BJ (cell line): ENCODE measurements at regions of chr5 and their contacts with region 1.

Region 1: GRCh38 chr5:111530298-111530740 is 18.0 kb upstream of the STARD4 start:
- DNase-seq: no peak
- H3K4me3 ChIP-seq: no peak overlapping the region
- H3K27me3 ChIP-seq: no peaks in the 10 kb centered on the region
- CTCF ChIP-seq: no peak

Region 2: DNA sequence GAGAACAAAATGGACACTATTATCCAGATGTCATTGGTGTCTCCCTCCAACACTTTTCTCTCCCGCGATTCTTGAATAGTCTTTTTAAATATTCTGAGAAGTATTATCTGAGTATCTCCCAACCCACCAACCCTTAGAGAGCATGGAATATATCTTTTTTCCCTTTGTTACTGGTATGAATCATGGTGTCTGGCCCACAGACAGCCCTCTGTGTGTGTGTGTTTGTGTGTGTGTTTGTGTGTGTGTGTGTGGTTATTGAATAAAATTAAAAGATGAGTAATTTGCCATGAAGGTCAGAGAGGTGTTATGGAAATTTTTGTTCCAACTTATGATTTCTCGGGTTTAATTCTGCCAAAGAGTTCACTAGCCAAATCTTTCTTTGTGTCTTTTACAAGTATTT is 258.4 kb before region 1 on chr5:
- CTCF ChIA-PET with region 1: no interaction called
- POLR2A ChIA-PET with region 1: no interaction called
- DNase-seq: no peak
- H3K4me3 ChIP-seq: no peak overlapping the region
- H3K27me3 ChIP-seq: no peaks in the 10 kb centered on the region
- CTCF ChIP-seq: no peak

Region 3: GRCh38 chr5:111517853-111518501 is 12.3 kb before region 1 on chr5:
- CTCF ChIA-PET with region 1: interaction called, 31 read pairs
- POLR2A ChIA-PET with region 1: no interaction called
- DNase-seq: no peak
- H3K4me3 ChIP-seq: no peak overlapping the region
- H3K27me3 ChIP-seq: no peaks in the 10 kb centered on the region
- CTCF ChIP-seq: no peak

Region 4: DNA sequence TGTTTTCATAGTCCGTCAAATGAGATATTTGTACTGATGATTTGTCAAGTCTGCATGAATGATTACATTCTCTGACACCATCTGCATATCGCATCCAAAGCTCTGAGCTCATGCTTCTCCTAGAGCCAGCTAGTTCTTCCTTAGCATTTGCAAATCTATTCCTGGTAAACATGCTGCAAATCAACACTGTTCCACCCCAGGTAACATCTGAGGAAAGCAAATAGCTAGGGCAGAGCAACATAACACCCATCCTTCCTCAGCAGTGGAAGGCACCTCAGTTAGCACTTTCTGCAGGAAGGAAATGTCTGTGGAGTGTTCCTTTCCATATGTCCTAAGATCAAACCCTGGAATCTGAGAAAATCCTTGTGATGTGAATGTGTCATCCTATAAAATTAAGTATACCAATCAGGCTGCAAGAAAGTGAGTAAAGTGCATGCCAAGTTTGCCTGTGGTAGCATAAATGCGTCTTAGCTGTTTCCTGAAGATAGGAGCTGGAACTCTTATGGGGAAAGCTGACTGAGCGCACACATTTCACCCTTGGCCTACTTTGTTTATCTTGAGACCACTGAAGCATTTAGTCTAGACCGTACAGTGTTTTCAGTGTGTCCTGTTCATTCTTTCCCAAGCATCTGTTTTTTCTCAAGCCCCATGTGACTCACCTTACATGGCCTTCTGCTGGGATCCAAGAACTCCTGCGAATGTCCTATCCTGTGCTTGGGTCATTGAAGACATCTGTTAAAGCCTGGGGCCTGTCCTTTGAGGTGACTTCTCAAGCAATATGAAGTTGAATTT is 32.9 kb after region 1 on chr5:
- CTCF ChIA-PET with region 1: interaction called, 4 read pairs
- POLR2A ChIA-PET with region 1: interaction called, 23 read pairs
- DNase-seq: peak; percentile 87
- H3K4me3 ChIP-seq: no peak overlapping the region
- H3K27me3 ChIP-seq: no peaks in the 10 kb centered on the region
- CTCF ChIP-seq: no peak

Region 5: GRCh38 chr5:111742177-111742994 is 212.1 kb after region 1 on chr5:
- CTCF ChIA-PET with region 1: interaction called, 5 read pairs
- POLR2A ChIA-PET with region 1: interaction called, 15 read pairs
- DNase-seq: peak; percentile 78
- H3K4me3 ChIP-seq: no peak overlapping the region
- H3K27me3 ChIP-seq: no peaks in the 10 kb centered on the region
- CTCF ChIP-seq: no peak

Region 6: DNA sequence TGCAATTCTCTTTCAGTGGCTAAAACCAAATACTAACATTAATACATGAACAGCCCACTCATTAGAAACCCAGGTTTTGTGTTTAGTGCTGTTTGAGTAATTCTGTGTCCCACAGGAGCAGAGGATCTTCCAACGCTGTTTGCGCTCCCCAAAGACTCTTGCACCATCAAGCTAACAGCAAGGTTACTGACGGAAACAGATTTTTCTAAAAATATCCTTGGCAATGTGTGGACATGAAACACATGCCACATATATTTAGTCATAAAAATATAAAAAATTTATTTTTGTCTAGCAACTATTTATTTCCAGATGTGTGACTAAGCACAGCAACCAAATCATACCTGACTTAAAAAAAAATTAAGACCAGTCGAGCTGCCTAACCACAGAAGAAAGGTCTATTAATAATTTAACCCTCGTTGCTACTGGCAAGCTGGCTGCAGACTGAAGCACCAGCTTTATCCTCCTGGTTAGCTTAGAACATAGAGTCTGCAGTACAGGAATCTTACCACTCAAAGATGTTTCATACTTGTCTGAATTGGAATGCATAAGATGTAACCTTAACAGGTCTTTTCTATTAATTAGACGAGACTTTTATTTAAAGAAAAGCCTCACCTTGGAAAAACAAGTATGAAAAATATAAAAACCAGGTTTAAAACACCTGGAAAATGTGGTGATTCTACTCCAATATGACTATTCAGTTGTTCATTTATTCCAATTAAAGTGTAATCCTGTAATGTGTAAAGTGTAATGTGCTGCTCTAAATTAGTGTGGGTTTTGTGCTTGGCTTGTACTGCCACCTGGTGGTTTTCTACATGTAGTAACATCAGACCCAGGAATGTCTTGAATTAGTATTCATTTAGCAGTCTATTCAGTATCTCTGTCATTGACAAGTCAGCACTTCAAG is 616.3 kb after region 1 on chr5:
- CTCF ChIA-PET with region 1: interaction called, 22 read pairs
- POLR2A ChIA-PET with region 1: no interaction called
- DNase-seq: peak; percentile 80
- H3K4me3 ChIP-seq: no peak overlapping the region
- H3K27me3 ChIP-seq: no peaks in the 10 kb centered on the region
- CTCF ChIP-seq: peak; percentile 65